ENCODE measurements at regions of chr1 and their contacts with region 1.

Region 1: GRCh38 chr1:111275079-111275478 is 15.6 kb upstream of the CHIA start:
- DNase-seq: peak; percentile 69
- H3K4me3 Mint-ChIP-seq: no peak overlapping the region
- H3K27ac Mint-ChIP-seq: peak overlapping the region; percentile 58
- H3K4me1 Mint-ChIP-seq: peaks cover 23% of the 10 kb centered on the region
- H3K27me3 Mint-ChIP-seq: peaks cover 25% of the 10 kb centered on the region

Region 2: DNA sequence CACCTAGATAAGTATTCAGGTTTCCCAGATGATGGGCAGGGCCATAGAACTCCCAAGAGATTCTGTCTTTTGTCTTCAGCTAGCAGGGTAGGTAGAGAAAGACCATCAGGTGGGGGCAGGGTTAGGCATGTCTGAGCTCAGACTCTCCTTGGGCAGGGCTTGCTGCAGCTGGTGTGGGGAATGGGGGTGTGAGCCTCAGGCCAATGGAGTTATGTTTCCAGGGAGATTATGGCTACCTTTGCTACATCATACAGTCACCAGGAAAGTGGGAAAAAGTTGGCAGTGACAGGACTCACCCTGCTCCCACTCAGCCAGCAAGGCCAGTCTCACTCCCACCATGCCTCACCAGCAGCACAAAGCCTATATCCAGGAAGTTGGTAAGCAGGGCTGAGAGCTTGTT is 213.0 kb before region 1 on chr1:
- intact Hi-C with region 1: no loop called
- DNase-seq: no peak
- H3K4me3 Mint-ChIP-seq: no peak overlapping the region
- H3K27ac Mint-ChIP-seq: no peak overlapping the region
- H3K4me1 Mint-ChIP-seq: no peaks in the 10 kb centered on the region
- H3K27me3 Mint-ChIP-seq: peaks cover 11% of the 10 kb centered on the region

Region 3: GRCh38 chr1:111214074-111214801 is 60.8 kb before region 1 on chr1:
- intact Hi-C with region 1: no loop called
- DNase-seq: peak; percentile 76
- H3K4me3 Mint-ChIP-seq: peak overlapping the region; percentile 84
- H3K27ac Mint-ChIP-seq: peak overlapping the region; percentile 92
- H3K4me1 Mint-ChIP-seq: peaks cover 69% of the 10 kb centered on the region
- H3K27me3 Mint-ChIP-seq: no peaks in the 10 kb centered on the region

Region 4: DNA sequence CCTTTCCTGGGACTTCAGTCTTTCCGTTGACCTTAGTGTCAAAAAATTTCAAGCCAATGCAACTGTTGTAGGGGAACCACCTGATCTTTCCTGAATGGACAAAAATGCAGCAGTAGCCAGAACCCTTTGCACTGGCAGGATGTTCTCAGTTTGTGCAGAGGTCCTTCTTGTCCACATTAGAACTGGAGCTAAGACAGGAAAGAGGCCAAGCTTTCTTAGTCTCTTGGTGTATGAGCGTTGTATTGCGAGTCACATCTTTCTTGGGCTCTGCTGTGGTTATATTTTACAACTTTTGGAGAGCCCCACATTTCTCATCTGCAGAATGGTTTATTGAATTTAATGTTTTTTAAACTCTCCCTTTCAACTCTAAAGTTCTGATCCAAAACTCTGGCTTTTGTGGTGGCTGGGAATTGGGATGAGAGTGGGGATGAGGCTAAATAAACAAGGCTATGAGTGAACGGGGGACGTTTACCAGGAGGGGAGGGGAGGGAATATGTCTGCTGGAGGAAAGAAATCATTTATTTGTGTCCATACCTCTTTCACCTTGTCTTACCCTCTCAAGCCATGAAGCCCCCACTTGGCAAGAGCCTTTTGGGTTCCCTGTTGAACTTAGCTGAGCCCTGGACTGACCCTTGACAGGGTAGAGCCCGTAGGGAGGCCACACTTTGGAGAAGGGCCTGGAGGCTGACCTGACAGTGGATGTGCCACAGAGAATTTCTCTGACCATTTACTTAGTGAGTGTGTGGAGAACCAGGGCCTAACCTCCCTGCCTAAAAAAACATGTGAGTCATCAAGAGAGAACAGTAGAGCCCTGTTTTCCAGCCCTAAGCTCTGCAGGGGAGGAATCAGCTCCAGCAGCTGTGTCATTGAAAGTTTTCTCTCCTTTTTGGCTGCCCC is 47.0 kb before region 1 on chr1:
- intact Hi-C with region 1: loop called (anchors 2 kb)
- DNase-seq: no peak
- H3K4me3 Mint-ChIP-seq: peak overlapping the region; percentile 36
- H3K27ac Mint-ChIP-seq: peak overlapping the region; percentile 87
- H3K4me1 Mint-ChIP-seq: peaks cover 66% of the 10 kb centered on the region
- H3K27me3 Mint-ChIP-seq: no peaks in the 10 kb centered on the region

Measured in activated CD4-positive, alpha-beta T cell treated with anti-CD3 and anti-CD28 coated beads, Interleukin-2, amount 10 ng/mL, durations not matched to agents 24 days and 14 days (primary cell).